H1 (cell line): ENCODE measurements at regions of chr12 and their contacts with region 1.

Region 1: DNA sequence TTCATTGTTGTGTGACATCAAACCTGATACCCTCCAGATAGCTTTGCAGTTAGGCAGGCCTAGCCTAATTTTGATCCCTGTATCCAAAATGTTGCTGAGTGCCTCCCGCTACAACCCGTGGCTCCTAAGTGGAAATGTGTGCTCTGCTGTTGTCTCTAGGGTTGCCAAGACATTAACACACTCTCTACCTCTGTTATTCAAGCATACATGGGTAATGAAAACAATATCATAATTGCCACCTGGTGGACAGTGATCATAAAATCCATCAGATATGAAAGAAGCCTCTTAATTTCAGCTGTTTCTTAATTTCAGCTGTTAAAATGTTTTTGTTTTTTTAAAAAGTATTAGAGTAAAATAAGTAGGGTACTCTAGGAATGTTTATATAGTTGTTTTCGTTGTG is 93.5 kb downstream of the PLEKHA5 start:
- DNase-seq: no peak
- H3K4me3 ChIP-seq: no peak overlapping the region
- H3K27ac ChIP-seq: no peak overlapping the region
- H3K4me1 ChIP-seq: peaks cover 0 to 4% (median 3%) of the 10 kb centered on the region in 4 experiments; a peak in 5 of 7 replicates
- H3K27me3 ChIP-seq: no peaks in the 10 kb centered on the region
- CTCF ChIP-seq: no peak
- EP300 ChIP-seq: no peak
- POLR2A ChIP-seq: no peak
- RAD21 ChIP-seq: no peak

Region 2: GRCh38 chr12:19236656-19237055 is 13.6 kb after region 1 on chr12:
- CTCF ChIA-PET with region 1: interaction called, 11 read pairs
- POLR2A ChIA-PET with region 1: interaction called, 4 read pairs
- DNase-seq: no peak
- H3K4me3 ChIP-seq: no peak overlapping the region
- H3K27ac ChIP-seq: no peak overlapping the region
- H3K4me1 ChIP-seq: peaks cover 0 to 15% (median 5%) of the 10 kb centered on the region in 4 experiments; a peak in 4 of 7 replicates
- H3K27me3 ChIP-seq: no peaks in the 10 kb centered on the region
- CTCF ChIP-seq: no peak
- EP300 ChIP-seq: no peak
- POLR2A ChIP-seq: no peak
- RAD21 ChIP-seq: no peak